ENCODE measurements at regions of chr12 and their contacts with region 1.

Region 1: GRCh38 chr12:12916135-12916944 is 25.0 kb downstream of the GPRC5A start:
- DNase-seq: peak; percentile 92
- ATAC-seq: peak; percentile 98
- H3K4me3 Mint-ChIP-seq: no peak overlapping the region
- H3K27ac Mint-ChIP-seq: no peak overlapping the region
- H3K4me1 Mint-ChIP-seq: peaks cover 7% of the 10 kb centered on the region
- H3K27me3 Mint-ChIP-seq: peaks cover 12% of the 10 kb centered on the region
- CTCF ChIP-seq: peak; percentile 89

Region 2: GRCh38 chr12:12853435-12853834 is 62.9 kb before region 1 on chr12:
- CTCF ChIA-PET with region 1: no interaction called
- POLR2A ChIA-PET with region 1: no interaction called
- intact Hi-C with region 1: no loop called
- DNase-seq: no peak
- ATAC-seq: no peak
- H3K4me3 Mint-ChIP-seq: no peak overlapping the region
- H3K27ac Mint-ChIP-seq: no peak overlapping the region
- H3K4me1 Mint-ChIP-seq: no peaks in the 10 kb centered on the region
- H3K27me3 Mint-ChIP-seq: no peaks in the 10 kb centered on the region
- CTCF ChIP-seq: no peak

Region 3: GRCh38 chr12:12934556-12934955 is 18.2 kb after region 1 on chr12:
- CTCF ChIA-PET with region 1: no interaction called
- POLR2A ChIA-PET with region 1: no interaction called
- intact Hi-C with region 1: no loop called
- DNase-seq: no peak
- ATAC-seq: no peak
- H3K4me3 Mint-ChIP-seq: no peak overlapping the region
- H3K27ac Mint-ChIP-seq: no peak overlapping the region
- H3K4me1 Mint-ChIP-seq: no peaks in the 10 kb centered on the region
- H3K27me3 Mint-ChIP-seq: no peaks in the 10 kb centered on the region
- CTCF ChIP-seq: no peak

Region 4: DNA sequence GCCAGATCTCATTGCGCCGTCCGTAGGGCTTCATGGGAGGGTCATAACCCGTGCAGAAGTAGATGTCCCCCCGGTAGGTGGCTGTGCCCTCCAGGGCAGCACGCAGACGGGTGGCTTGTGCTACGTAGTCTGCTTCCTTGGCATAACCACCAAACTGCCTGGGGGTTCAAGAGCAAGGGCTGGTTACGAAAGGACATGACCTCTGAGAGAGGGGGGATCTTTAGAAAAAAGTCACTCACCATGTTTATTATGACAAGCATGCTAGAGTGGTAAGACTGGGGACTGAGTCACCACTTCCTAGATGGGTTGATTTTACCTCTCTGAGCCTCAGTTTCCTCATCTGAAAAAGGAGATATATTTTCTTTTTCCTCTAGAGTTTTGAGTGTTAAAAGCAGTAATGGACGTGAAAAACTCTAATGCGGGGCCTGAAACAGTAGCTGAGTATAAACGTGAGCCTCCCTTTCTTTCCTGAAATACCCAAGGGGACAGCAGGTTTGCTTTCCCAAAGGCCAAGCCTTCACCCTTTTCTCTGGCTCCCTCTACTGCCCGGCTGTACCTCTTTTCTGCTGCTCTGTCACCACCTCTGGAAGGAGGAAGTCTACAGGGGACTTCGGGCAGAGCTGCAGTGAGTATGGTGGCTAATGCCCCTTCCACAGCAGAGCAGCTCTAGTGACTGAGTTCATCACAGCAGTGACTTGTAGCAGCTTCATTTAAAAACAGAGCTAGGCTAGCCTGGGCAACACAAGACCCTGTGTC is 59.2 kb after region 1 on chr12:
- CTCF ChIA-PET with region 1: interaction called, 10 read pairs
- POLR2A ChIA-PET with region 1: no interaction called
- intact Hi-C with region 1: no loop called
- DNase-seq: no peak
- ATAC-seq: peak; percentile 37
- H3K4me3 Mint-ChIP-seq: no peak overlapping the region
- H3K27ac Mint-ChIP-seq: no peak overlapping the region
- H3K4me1 Mint-ChIP-seq: no peaks in the 10 kb centered on the region
- H3K27me3 Mint-ChIP-seq: no peaks in the 10 kb centered on the region
- CTCF ChIP-seq: no peak

Region 5: GRCh38 chr12:13044002-13044905 is 127.9 kb after region 1 on chr12 and contains the start of gene FAM234B:
- CTCF ChIA-PET with region 1: interaction called, 16 read pairs
- POLR2A ChIA-PET with region 1: no interaction called
- intact Hi-C with region 1: no loop called
- DNase-seq: peak; percentile 81
- ATAC-seq: peak; percentile 95
- H3K4me3 Mint-ChIP-seq: peak within 1 kb of the TSS; percentile 77
- H3K27ac Mint-ChIP-seq: peak within 1 kb of the TSS; percentile 35
- H3K4me1 Mint-ChIP-seq: peaks cover 14% of the 10 kb centered on the region
- H3K27me3 Mint-ChIP-seq: no peaks in the 10 kb centered on the region
- CTCF ChIP-seq: peak; percentile 23
- total RNA-seq, gene FAM234B: 10.0 to 10.7 TPM

Region 6: DNA sequence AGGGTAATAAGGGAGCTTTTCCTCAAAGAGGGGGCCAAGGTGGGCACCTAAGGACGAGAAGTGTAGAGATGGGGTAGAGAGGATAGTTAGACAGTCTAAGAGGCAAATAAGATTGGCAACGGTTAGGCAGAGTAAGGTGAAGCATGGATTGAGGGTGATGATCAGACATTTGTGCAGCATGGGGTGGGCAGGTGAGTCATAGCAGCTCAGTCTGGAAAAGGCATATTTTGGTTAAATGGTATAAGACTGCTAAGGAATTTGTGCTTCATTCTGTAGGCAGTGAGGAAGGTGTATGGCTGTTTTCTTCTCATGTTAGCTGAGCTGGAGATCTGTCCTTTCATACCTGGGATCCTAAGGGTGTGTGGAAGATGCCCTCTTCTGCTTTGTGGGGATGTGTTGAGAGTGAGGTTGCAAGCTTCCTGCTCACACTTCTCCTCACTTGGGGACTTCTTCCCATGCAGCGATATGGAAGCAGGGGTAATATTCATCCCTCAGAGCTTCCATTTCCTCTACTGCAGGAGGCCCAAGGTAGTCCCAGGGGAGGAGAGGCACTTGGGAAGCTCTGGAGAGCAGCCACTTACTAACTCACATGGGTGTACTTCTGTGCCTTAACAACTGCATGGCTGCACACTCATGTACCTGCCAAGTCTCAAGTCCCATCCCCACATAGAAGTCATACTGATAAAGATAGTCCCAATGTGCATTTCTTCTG is 158.2 kb after region 1 on chr12:
- CTCF ChIA-PET with region 1: no interaction called
- POLR2A ChIA-PET with region 1: no interaction called
- intact Hi-C with region 1: no loop called
- DNase-seq: no peak
- ATAC-seq: no peak
- H3K4me3 Mint-ChIP-seq: no peak overlapping the region
- H3K27ac Mint-ChIP-seq: no peak overlapping the region
- H3K4me1 Mint-ChIP-seq: no peaks in the 10 kb centered on the region
- H3K27me3 Mint-ChIP-seq: no peaks in the 10 kb centered on the region
- CTCF ChIP-seq: no peak

Region 7: DNA sequence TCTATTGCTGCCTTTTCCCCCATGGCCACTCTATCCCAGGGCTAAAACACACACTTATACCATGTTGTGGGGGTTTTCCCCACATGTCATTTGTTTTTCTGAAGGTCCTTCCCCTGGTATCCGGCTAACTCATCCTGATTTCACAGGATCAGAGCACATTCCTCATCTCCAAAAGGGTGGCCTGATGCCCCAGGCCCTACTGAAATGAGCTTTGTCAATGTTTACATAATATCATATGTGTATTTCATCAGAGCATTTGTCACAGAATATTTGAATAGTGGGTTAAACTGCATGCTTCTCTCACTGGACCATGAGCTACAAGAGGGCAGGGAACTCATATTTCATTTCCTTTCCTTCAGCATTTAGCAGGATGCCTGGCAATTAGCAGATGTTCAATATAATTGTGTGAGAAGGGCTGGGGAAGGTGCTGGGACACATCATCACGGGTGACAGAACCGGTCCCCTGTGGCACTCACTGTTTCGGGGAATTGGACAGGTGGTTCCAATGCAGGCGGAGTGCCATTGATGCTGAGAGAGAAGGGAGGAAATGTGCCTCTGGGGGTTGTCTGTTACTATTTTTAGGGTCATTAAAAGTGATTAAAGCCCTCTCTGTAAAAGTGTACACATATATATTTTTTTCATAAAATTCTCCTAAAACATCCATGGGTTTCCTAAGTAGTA is 307.0 kb after region 1 on chr12:
- CTCF ChIA-PET with region 1: interaction called, 21 read pairs
- POLR2A ChIA-PET with region 1: no interaction called
- intact Hi-C with region 1: no loop called
- DNase-seq: no peak
- ATAC-seq: no peak
- H3K4me3 Mint-ChIP-seq: no peak overlapping the region
- H3K27ac Mint-ChIP-seq: no peak overlapping the region
- H3K4me1 Mint-ChIP-seq: no peaks in the 10 kb centered on the region
- H3K27me3 Mint-ChIP-seq: peaks cover 16% of the 10 kb centered on the region
- CTCF ChIP-seq: no peak